ENCODE measurements at regions of chr3 and their contacts with region 1.

Region 1: DNA sequence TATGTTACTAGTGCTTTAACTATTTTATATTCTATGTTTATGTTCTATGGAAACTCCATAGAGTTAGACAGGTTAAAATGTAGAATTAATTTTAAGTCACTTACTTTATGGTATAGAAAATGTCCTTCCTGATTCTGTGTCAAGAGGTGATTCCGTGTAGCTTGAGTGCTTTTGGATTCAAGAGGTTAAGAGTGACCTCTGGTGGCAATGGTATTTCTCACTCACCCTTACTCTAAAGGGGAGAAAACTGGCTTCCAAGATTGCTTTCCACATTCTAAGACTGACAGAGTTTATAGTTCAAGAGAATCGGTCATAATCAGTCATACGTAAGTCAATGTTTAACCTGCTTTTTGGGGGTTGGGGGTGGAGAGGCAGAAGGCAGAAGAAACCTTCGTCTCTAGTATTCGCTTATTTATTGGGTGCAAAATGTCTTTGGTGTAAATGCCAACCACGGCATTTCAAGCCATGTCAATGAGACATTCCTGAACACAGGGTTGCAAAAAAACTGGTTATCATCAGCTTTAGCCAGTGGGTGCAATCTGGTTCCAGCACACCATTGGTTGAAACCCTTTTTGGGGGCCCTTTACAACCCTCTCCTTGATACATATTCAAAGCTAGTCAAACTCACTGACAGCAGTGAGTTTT is 92.0 kb upstream of the VGLL3 start:
- ATAC-seq: peak in 6 of 8 experiments; percentile 44 to 96 (median 84)
- H3K4me3 ChIP-seq: no peak overlapping the region
- H3K27ac ChIP-seq: no peak overlapping the region
- H3K4me1 ChIP-seq: no peaks in the 10 kb centered on the region

Region 2: DNA sequence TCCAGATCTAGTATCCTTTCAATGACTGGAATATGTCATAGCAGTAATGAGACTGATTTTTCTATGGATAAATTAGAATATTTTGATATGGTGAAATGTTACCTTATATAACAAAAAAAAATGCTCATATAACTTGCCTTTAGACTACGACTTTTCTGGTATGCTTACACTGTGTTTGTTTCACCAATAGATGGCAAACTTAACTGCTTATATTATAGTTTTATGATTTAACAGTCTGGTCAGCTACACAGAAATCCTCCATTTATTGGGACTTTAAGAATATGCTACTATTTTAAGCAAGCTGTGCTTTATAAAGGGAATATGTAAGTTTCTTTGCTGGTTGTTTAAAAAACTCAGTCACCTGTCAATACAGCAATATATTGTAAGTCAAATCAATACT is 297.5 kb before region 1 on chr3:
- in situ Hi-C with region 1: loop called in 4 of 9 experiments (anchors 10 to 25 kb)
- ATAC-seq: peak in 5 of 8 experiments; percentile 50 to 81 (median 73)
- H3K4me3 ChIP-seq: no peak overlapping the region
- H3K27ac ChIP-seq: no peak overlapping the region
- H3K4me1 ChIP-seq: peaks cover 0 to 3% of the 10 kb centered on the region in 2 donors

Region 3: GRCh38 chr3:86967062-86967461 is 115.9 kb before region 1 on chr3:
- in situ Hi-C with region 1: no loop called
- ATAC-seq: no peak
- H3K4me3 ChIP-seq: no peak overlapping the region
- H3K27ac ChIP-seq: no peak overlapping the region
- H3K4me1 ChIP-seq: no peaks in the 10 kb centered on the region

Region 4: GRCh38 chr3:86990734-86991481 is 92.0 kb before region 1 on chr3 and contains the start of gene VGLL3:
- in situ Hi-C with region 1: loop called in 3 of 9 experiments (anchors 10 to 25 kb)
- ATAC-seq: peak; percentile 84 to 96 (median 94)
- H3K4me3 ChIP-seq: peak within 1 kb of the TSS; percentile 51 to 80 (median 75)
- H3K27ac ChIP-seq: no peak within 1 kb of the TSS
- H3K4me1 ChIP-seq: no peaks in the 10 kb centered on the region
- total RNA-seq, gene VGLL3: 0.32 to 207 (median 14.4) TPM

Region 5: DNA sequence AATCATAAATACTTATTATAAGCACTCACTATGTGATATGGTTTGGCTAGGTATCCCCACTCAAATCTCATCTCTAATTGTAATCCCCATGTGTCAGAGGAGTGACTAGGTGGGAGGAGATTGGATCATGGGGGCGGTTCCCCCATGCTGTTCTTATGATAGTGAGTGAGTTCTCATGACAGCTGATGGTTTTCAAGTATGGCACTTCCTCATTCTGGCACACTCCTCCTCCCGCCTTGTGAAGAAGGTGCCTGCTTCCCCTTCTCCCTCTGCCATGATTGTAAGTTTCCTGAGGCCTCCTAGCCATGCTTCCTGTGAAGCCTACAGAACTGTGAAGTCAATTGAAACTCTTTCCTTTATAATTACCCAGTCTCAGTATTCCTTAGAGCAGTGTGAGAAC is 90.9 kb after region 1 on chr3:
- in situ Hi-C with region 1: loop called in 1 of 9 experiments (anchors 10 kb)
- ATAC-seq: no peak
- H3K4me3 ChIP-seq: no peak overlapping the region
- H3K27ac ChIP-seq: no peak overlapping the region
- H3K4me1 ChIP-seq: no peaks in the 10 kb centered on the region

Region 6: DNA sequence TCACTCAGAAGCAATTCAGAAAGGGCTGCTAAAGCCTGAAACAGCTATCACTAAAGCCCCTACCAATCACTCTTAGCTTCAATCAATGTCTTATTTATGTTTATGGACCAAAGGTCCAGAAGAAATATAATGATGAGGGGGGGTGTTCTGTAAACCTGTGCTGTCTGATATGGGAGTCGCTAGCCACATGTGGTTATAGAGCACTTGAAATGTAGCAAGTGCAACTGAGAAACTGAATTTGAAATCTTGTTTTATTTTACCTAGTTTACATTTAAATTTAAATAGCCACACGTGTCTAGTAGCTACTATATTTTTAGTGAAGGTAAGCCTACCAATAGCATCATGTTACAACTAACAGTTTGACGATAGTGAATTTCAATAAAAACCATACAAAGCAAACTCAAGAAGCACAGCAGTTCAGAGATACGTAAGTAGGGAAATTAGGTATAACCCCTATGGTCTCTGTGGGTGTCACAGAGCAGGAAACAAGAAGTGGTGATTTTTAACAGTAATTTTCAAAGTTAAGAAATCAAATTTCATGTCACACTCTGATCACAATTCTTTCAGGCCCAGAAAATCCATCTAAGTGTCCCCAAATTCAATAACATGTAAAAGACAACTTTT is 189.9 kb after region 1 on chr3:
- in situ Hi-C with region 1: no loop called
- ATAC-seq: no peak
- H3K4me3 ChIP-seq: no peak overlapping the region
- H3K27ac ChIP-seq: no peak overlapping the region
- H3K4me1 ChIP-seq: no peaks in the 10 kb centered on the region